Naive thymus-derived CD4-positive, alpha-beta T cell (primary cell): ENCODE measurements at regions of chr17 and their contacts with region 1.

Region 1: DNA sequence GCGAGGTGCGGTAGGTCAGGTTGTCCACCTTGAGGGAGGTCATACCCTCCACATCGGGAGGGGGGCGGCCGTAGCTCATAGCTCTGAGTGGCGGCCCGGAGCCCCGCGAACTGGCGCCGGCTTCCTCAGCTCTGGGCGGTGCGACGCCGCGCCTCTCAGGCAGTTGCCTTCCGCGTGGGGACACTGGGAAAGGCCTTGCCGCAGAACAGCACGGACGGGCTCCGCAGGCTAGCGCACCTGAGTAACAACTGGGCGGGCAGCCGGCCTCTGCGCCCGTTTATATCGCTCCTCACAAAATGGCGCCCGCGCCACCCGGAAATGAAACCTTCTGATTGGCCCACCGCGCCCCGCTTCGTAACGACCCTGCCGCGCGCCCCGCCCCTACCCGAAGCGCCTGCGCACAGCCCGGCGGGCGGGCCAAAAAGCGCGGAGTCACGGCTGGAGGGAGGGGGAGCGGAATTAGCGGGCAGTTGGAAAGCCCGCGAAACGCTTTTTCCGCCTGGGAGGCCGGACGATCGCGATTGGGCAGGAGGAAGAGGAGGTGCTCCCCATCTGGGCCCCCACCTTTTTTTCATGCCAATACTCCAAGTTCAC is at the start of gene SRSF2:
- DNase-seq: peak; percentile 98 to 100 (median 99)
- ATAC-seq: peak; percentile 86
- H3K4me3 ChIP-seq: peak within 1 kb of the TSS; percentile 97
- H3K4me3 Mint-ChIP-seq: peak within 1 kb of the TSS; percentile 90 to 99 (median 97)
- H3K27ac ChIP-seq: peak within 1 kb of the TSS; percentile 96
- H3K27ac Mint-ChIP-seq: peak within 1 kb of the TSS; percentile 95 to 100 (median 99)
- H3K4me1 ChIP-seq: peaks cover 45 to 49% of the 10 kb centered on the region in 2 donors
- H3K4me1 Mint-ChIP-seq: peaks cover 26 to 66% (median 58%) of the 10 kb centered on the region in 7 donors
- H3K27me3 ChIP-seq: no peaks in the 10 kb centered on the region
- H3K27me3 Mint-ChIP-seq: no peaks in the 10 kb centered on the region
- total RNA-seq, gene SRSF2: 327 to 363 (median 351) TPM

Region 2: DNA sequence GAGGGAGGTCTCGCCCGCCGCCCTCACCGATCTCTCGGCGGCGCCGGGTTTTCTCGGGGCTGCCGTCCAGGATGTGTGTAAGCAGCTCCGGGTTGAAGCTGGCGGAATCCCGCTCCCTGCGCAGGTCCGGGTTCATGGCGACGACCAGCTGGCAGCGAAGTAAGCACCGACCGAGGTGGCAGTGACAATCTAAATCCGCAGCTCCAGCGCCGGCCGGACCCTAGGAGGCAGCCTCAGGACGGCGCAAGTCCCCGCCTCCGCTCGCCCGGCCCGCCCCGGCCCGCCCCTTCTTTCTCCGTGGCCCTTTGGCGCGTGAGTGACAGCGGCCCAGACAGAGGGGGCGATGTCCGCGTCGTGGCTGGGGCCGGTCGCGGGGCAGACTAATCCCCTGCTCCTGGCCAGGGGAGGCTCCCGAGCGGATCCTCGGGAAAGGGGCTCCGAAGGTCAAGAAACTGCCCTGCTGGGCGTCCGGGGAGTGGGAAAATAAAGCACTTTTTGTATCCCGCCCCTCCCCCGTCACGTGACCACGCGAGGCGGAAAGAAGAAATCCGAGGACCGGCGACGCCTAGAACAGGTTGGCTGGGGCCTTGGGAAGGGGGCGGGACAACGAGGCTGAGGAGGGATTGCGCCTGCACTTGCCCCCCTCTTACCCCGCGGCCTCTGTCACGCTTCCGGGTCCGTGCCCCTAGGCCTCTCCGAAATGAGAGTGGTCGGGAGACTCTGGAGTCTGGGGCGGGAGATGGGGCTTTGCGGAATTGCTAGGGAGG is 758.1 kb before region 1 on chr17 and contains the starts of genes ACOX1 and TEN1:
- CTCF ChIA-PET with region 1: no interaction called
- POLR2A ChIA-PET with region 1: no interaction called
- intact Hi-C with region 1: loop called in 1 of 2 experiments (anchors 5 kb)
- DNase-seq: peak; percentile 84 to 96 (median 93)
- ATAC-seq: peak; percentile 95
- H3K4me3 ChIP-seq: peak within 1 kb of the TSS; percentile 89
- H3K4me3 Mint-ChIP-seq: peak within 1 kb of the TSS; percentile 91 to 99 (median 98)
- H3K27ac ChIP-seq: peak within 1 kb of the TSS; percentile 100
- H3K27ac Mint-ChIP-seq: peak within 1 kb of the TSS; percentile 98 to 100 (median 100)
- H3K4me1 ChIP-seq: peaks cover 5 to 6% of the 10 kb centered on the region in 2 donors
- H3K4me1 Mint-ChIP-seq: peaks cover 26 to 53% (median 47%) of the 10 kb centered on the region in 7 donors
- H3K27me3 ChIP-seq: no peaks in the 10 kb centered on the region
- H3K27me3 Mint-ChIP-seq: no peaks in the 10 kb centered on the region
- total RNA-seq, gene ACOX1: 22.8 to 35.0 (median 33.5) TPM
- total RNA-seq, gene TEN1: 13.1 to 20.1 (median 13.8) TPM

Region 3: DNA sequence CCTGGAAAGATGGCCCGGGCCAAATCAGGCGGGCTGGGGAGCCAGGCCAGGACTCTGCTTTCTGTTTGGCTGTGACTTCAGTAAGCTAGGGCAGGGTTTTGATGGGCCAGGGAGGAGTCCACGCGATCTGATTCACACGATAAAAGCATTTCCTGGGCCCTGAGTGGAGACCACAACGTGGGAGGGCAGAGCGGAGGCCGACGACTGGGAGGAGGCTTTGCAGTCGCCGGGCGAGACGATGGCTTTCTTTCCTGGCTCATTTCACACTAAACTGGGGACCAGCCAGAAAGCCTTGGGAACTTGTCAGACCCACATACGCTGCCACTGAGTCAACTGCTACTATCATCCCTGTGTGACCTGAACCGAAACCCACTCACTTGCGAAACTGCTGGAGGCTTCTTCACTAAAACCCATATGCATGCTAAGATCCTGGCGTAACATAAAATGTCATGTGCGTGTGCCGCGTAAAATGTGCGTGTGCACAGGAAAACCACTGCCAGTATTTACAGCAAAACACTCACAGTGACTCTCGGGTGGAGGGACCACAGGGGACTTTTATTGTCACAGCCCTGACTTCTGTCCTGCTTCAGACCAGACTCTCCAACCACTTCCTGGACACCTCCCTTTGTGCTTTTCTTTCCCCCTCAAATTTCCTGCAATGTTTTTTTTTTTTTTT is 221.8 kb before region 1 on chr17:
- CTCF ChIA-PET with region 1: no interaction called
- POLR2A ChIA-PET with region 1: interaction called, 3 read pairs
- intact Hi-C with region 1: loop called in 1 of 2 experiments (anchors 5 kb)
- DNase-seq: peak; percentile 62 to 94 (median 90)
- ATAC-seq: peak; percentile 90
- H3K4me3 ChIP-seq: peak overlapping the region; percentile 12
- H3K4me3 Mint-ChIP-seq: peak overlapping the region; percentile 75 to 89 (median 82)
- H3K27ac ChIP-seq: peak overlapping the region; percentile 96
- H3K27ac Mint-ChIP-seq: peak overlapping the region; percentile 95 to 100 (median 99)
- H3K4me1 ChIP-seq: peaks cover 36 to 58% of the 10 kb centered on the region in 2 donors
- H3K4me1 Mint-ChIP-seq: peaks cover 25 to 67% (median 37%) of the 10 kb centered on the region in 7 donors
- H3K27me3 ChIP-seq: no peaks in the 10 kb centered on the region
- H3K27me3 Mint-ChIP-seq: peaks cover 0 to 5% (median 0%) of the 10 kb centered on the region in 5 donors

Region 4: DNA sequence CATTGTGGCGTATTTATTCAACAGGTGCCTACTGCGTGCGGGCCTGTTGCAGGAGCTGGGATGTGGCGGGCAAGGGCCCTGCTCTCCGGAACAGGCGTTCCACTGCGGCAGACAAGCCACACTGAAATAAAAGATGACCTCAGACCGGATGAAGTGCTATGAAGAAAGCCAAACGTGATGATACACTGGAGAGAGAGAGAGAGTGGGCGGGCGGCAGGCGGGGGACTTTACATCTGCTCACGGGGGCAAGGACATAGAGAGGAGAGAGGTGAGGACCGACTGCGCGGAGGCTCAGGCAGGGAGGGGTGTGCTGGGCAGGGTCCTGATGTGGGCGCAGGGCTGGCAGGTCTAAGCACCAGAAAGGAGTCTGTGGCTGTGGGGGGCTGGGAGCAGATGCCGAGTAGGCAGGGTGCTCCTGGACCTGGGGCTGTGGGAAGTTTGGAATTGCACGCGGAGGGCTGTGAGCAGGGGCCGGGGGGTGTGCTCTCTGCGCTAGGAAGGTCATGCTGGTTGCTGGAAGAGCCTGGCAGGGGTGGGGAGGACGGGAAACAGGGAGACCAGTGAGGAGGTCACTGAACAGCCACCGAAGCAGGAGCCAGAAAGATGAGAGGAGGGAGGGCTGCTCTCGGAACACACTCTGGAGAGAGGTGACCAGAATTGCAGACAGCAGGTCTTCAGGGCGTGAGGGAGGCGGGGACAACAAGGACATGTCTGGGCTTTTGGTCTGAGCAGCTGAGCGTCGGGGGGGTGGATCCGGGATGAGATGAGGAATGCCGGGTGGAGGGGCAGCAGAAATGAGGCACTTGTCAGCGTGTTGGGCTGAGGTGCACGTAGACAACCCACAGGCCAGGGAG is 36.3 kb before region 1 on chr17:
- CTCF ChIA-PET with region 1: no interaction called
- POLR2A ChIA-PET with region 1: no interaction called
- intact Hi-C with region 1: no loop called
- DNase-seq: no peak
- ATAC-seq: peak; percentile 52
- H3K4me3 ChIP-seq: no peak overlapping the region
- H3K4me3 Mint-ChIP-seq: no peak overlapping the region
- H3K27ac ChIP-seq: no peak overlapping the region
- H3K27ac Mint-ChIP-seq: peak overlapping the region in 4 of 9 donors; percentile 21 to 48 (median 25)
- H3K4me1 ChIP-seq: no peaks in the 10 kb centered on the region
- H3K4me1 Mint-ChIP-seq: peaks cover 0 to 7% (median 0%) of the 10 kb centered on the region in 7 donors
- H3K27me3 ChIP-seq: no peaks in the 10 kb centered on the region
- H3K27me3 Mint-ChIP-seq: peaks cover 0 to 4% (median 0%) of the 10 kb centered on the region in 5 donors

Region 5: GRCh38 chr17:76747716-76748363 is 10.7 kb after region 1 on chr17:
- CTCF ChIA-PET with region 1: interaction called, 3 read pairs
- POLR2A ChIA-PET with region 1: interaction called, 64 read pairs
- intact Hi-C with region 1: loop called (anchors 1 kb)
- DNase-seq: no peak
- ATAC-seq: no peak
- H3K4me3 ChIP-seq: no peak overlapping the region
- H3K4me3 Mint-ChIP-seq: no peak overlapping the region
- H3K27ac ChIP-seq: no peak overlapping the region
- H3K27ac Mint-ChIP-seq: peak overlapping the region in 1 of 9 donors; percentile 30
- H3K4me1 ChIP-seq: peaks cover 7 to 8% of the 10 kb centered on the region in 2 donors
- H3K4me1 Mint-ChIP-seq: peaks cover 7 to 22% (median 12%) of the 10 kb centered on the region in 7 donors
- H3K27me3 ChIP-seq: no peaks in the 10 kb centered on the region
- H3K27me3 Mint-ChIP-seq: no peaks in the 10 kb centered on the region

Region 6: GRCh38 chr17:76781056-76781982 is 44.1 kb after region 1 on chr17:
- CTCF ChIA-PET with region 1: interaction called, 3 read pairs
- POLR2A ChIA-PET with region 1: interaction called, 3 read pairs
- intact Hi-C with region 1: loop called in 1 of 2 experiments (anchors 1 kb)
- DNase-seq: peak in 5 of 9 donors; percentile 9 to 34 (median 16)
- ATAC-seq: peak; percentile 44
- H3K4me3 ChIP-seq: no peak overlapping the region
- H3K4me3 Mint-ChIP-seq: no peak overlapping the region
- H3K27ac ChIP-seq: no peak overlapping the region
- H3K27ac Mint-ChIP-seq: peak overlapping the region in 2 of 9 donors; percentile 47 to 64
- H3K4me1 ChIP-seq: no peaks in the 10 kb centered on the region
- H3K4me1 Mint-ChIP-seq: peaks cover 0 to 6% (median 0%) of the 10 kb centered on the region in 7 donors
- H3K27me3 ChIP-seq: no peaks in the 10 kb centered on the region
- H3K27me3 Mint-ChIP-seq: no peaks in the 10 kb centered on the region

Region 7: DNA sequence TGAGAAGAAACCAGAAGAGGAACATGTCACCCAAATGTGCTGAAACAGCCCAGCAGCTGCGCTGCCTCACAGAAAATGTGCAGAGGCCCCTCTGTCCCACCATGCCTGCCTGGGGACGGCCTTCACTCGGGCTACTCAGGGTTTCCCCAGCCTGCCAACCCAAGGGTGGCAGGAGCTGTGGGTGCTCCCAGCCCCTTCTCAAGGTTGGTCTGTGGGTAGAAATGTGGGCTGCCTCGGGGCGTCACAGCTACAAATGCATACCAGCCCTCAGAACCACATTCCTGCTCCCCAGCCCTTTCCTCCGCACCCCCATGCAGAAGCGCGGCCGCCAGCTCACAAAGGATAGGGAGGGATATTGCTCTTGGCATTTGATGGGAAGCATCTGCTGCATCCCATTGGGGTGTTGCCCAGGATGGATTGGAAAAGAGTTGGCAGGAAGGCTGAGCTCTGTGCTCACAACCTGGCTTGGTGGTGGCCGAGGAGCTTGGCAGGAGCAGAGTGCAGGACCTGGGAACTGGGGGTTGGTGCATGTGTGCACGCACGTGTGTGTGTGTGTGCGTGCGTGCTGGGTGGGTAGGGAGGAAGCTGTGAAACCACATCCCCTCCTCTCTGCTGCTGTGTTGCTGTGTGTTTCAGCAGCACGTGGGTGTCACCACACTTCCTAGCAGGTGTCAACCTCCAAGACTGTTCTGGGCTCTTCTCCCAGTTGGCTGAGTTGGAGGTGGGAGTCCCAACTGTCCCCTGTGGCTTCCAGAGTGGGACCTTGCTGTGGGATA is 708.0 kb after region 1 on chr17:
- CTCF ChIA-PET with region 1: no interaction called
- POLR2A ChIA-PET with region 1: interaction called, 4 read pairs
- intact Hi-C with region 1: loop called in 1 of 2 experiments (anchors 10 kb)
- DNase-seq: peak; percentile 68 to 96 (median 94)
- ATAC-seq: peak; percentile 84
- H3K4me3 ChIP-seq: peak overlapping the region; percentile 57
- H3K4me3 Mint-ChIP-seq: peak overlapping the region; percentile 77 to 98 (median 86)
- H3K27ac ChIP-seq: peak overlapping the region; percentile 92
- H3K27ac Mint-ChIP-seq: peak overlapping the region; percentile 93 to 100 (median 99)
- H3K4me1 ChIP-seq: peaks cover 90 to 91% of the 10 kb centered on the region in 2 donors
- H3K4me1 Mint-ChIP-seq: peaks cover 73 to 99% (median 93%) of the 10 kb centered on the region in 7 donors
- H3K27me3 ChIP-seq: no peaks in the 10 kb centered on the region
- H3K27me3 Mint-ChIP-seq: no peaks in the 10 kb centered on the region